B cell (primary cell): ENCODE measurements at regions of chr18 and their contacts with region 1.

Region 1: GRCh38 chr18:36284671-36285295 is 12.7 kb upstream of the FHOD3 start:
- DNase-seq: peak; percentile 77
- ATAC-seq: peak; percentile 70
- H3K4me3 ChIP-seq: no peak overlapping the region
- H3K4me3 Mint-ChIP-seq: no peak overlapping the region
- H3K27ac ChIP-seq: no peak overlapping the region
- H3K27ac Mint-ChIP-seq: no peak overlapping the region
- H3K4me1 ChIP-seq: no peaks in the 10 kb centered on the region
- H3K4me1 Mint-ChIP-seq: peaks cover 2% of the 10 kb centered on the region
- H3K27me3 ChIP-seq: peaks cover 0 to 13% (median 7%) of the 10 kb centered on the region in 4 experiments
- H3K27me3 Mint-ChIP-seq: peaks cover 48% of the 10 kb centered on the region
- CTCF ChIP-seq: peak; percentile 96

Region 2: DNA sequence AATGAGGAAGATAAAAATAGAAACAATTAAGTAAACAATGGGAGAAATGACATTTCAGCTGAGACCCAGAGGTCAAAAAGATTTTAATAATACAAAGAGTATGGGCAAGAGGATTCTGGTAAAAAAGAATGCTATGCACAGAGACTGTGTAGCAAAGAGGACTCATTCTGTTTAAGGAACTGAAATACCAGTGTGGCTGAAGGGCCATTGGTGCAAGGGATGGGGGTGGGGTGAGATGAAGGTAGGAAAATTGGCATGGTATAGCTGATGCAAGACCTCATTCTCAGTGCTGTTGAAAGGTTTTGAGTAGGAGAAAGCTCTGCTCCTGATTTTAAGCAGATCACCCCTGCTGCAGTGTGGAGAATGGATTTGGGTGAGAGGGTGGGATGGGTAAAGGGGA is 692.5 kb before region 1 on chr18:
- CTCF ChIA-PET with region 1: no interaction called
- POLR2A ChIA-PET with region 1: no interaction called
- intact Hi-C with region 1: loop called (anchors 1 kb)
- DNase-seq: peak; percentile 65
- ATAC-seq: peak; percentile 97
- H3K4me3 ChIP-seq: no peak overlapping the region
- H3K4me3 Mint-ChIP-seq: no peak overlapping the region
- H3K27ac ChIP-seq: peak overlapping the region in 1 of 2 donors; percentile 47
- H3K27ac Mint-ChIP-seq: no peak overlapping the region
- H3K4me1 ChIP-seq: peaks cover 54 to 55% of the 10 kb centered on the region in 2 donors
- H3K4me1 Mint-ChIP-seq: peaks cover 40% of the 10 kb centered on the region
- H3K27me3 ChIP-seq: no peaks in the 10 kb centered on the region
- H3K27me3 Mint-ChIP-seq: no peaks in the 10 kb centered on the region
- CTCF ChIP-seq: no peak

Region 3: DNA sequence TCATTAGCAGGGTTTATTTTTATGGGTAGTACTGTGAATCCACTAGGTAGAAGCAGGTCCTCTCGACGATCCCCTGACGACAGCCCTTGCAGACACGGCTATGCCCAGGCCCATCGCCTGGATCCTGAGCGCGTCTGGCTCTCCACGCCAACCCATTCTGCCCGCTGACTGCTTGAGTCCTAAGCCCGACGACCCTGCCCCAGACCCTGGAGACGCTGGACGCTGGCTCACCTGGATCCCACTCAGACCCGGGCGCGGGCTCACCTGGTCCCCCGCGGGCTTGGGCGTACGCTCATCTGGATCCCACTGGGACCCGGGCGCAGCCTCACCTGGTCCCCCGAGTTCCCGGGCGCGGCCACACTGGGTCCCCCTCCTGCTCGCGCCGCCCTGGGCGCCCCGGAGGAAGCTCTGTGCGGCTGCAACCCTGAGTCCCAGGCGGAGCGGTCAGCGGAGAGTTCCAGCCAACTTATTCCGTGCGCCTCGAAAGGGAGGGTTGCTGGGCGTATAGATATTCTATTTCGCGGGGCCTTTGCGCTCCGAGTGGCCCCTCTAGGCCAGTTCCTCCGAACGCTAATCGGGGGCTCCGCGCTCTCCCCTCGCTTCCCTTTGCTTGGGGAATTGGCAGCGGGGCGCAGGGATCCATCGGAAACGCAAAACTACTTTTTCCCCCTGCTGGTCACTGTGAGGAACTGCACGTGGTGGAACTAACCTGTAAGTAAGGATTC is 334.7 kb before region 1 on chr18:
- CTCF ChIA-PET with region 1: interaction called, 4 read pairs
- POLR2A ChIA-PET with region 1: no interaction called
- intact Hi-C with region 1: loop called (anchors 2 kb)
- DNase-seq: peak; percentile 77
- ATAC-seq: peak; percentile 86
- H3K4me3 ChIP-seq: peak overlapping the region; percentile 11 to 56 (median 49)
- H3K4me3 Mint-ChIP-seq: peak overlapping the region; percentile 81
- H3K27ac ChIP-seq: no peak overlapping the region
- H3K27ac Mint-ChIP-seq: no peak overlapping the region
- H3K4me1 ChIP-seq: peaks cover 7 to 8% of the 10 kb centered on the region in 2 donors
- H3K4me1 Mint-ChIP-seq: peaks cover 10% of the 10 kb centered on the region
- H3K27me3 ChIP-seq: peaks cover 0 to 10% (median 7%) of the 10 kb centered on the region in 4 experiments
- H3K27me3 Mint-ChIP-seq: peaks cover 32% of the 10 kb centered on the region
- CTCF ChIP-seq: peak; percentile 99

Region 4: GRCh38 chr18:36028859-36029258 is 255.9 kb before region 1 on chr18:
- CTCF ChIA-PET with region 1: interaction called, 11 read pairs
- POLR2A ChIA-PET with region 1: no interaction called
- intact Hi-C with region 1: no loop called
- DNase-seq: no peak
- ATAC-seq: no peak
- H3K4me3 ChIP-seq: no peak overlapping the region
- H3K4me3 Mint-ChIP-seq: no peak overlapping the region
- H3K27ac ChIP-seq: no peak overlapping the region
- H3K27ac Mint-ChIP-seq: no peak overlapping the region
- H3K4me1 ChIP-seq: peaks cover 22 to 34% of the 10 kb centered on the region in 2 donors
- H3K4me1 Mint-ChIP-seq: peaks cover 35% of the 10 kb centered on the region
- H3K27me3 ChIP-seq: no peaks in the 10 kb centered on the region
- H3K27me3 Mint-ChIP-seq: no peaks in the 10 kb centered on the region
- CTCF ChIP-seq: no peak

Region 5: DNA sequence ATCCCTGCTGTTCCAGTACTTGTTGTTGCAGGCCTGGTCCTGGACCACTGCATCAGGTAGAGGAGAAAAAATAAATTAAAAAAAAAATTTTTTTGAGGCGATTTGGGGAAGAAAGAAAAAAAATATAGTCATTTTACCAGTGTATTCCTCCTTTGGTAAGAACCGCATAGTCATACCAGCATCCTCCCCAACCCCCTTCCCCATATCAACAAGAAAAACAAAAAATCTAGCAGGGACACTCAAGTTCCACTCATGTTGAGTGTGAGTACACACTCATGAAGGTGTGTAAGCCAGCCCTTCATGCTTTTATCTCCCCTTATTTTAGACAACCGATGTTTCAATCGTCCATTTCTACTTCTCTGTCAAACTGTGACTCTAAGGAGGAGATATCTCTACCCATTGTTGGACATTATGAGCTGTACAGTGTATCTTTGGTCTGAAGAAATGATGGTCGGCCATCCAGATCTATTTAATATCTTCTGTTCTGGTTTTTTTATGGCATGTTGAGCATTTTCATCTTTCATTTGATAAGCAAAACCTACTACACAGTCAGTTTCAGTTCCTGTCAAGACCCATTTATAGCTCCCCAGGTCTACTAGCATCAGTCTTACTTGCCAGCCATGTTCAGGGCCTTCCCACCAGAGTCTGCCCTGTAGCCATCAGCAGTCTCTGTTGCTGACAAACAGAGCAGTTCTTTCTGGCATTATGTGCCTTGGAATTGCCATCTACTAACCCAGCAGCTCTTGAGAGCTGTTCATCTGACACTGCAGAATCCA is 135.1 kb before region 1 on chr18:
- CTCF ChIA-PET with region 1: interaction called, 10 read pairs
- POLR2A ChIA-PET with region 1: no interaction called
- intact Hi-C with region 1: no loop called
- DNase-seq: peak; percentile 71
- ATAC-seq: peak; percentile 96
- H3K4me3 ChIP-seq: peak overlapping the region in 2 of 5 experiments; percentile 11 to 16
- H3K4me3 Mint-ChIP-seq: peak overlapping the region; percentile 76
- H3K27ac ChIP-seq: peak overlapping the region; percentile 66 to 76
- H3K27ac Mint-ChIP-seq: peak overlapping the region; percentile 90
- H3K4me1 ChIP-seq: peaks cover 32 to 40% of the 10 kb centered on the region in 2 donors
- H3K4me1 Mint-ChIP-seq: peaks cover 42% of the 10 kb centered on the region
- H3K27me3 ChIP-seq: no peaks in the 10 kb centered on the region
- H3K27me3 Mint-ChIP-seq: no peaks in the 10 kb centered on the region
- CTCF ChIP-seq: no peak

Region 6: DNA sequence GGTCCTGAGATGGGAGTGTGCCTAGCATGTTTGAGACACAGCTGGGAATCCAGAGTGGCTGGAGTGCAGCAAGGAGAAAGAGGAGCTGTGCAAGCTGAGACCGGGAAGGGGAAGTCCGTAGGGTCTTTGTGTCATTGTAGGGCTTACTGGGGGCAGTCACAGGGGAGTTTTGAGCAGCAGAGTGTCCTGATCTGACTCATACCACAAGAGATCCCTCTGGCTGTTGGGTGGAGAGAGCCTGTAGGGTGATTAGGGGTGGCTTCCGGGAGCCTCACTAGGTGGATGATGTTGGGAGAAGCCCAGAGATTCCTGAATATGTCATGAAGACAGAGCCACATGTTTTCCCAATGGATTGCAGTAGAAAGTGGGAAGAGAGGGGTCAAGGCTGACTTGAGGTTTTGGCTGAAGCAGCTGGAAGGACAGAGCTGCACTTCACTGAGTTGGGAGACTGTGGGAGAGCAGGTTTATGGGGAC is 43.6 kb after region 1 on chr18:
- CTCF ChIA-PET with region 1: no interaction called
- POLR2A ChIA-PET with region 1: no interaction called
- intact Hi-C with region 1: no loop called
- DNase-seq: no peak
- ATAC-seq: no peak
- H3K4me3 ChIP-seq: no peak overlapping the region
- H3K4me3 Mint-ChIP-seq: no peak overlapping the region
- H3K27ac ChIP-seq: no peak overlapping the region
- H3K27ac Mint-ChIP-seq: no peak overlapping the region
- H3K4me1 ChIP-seq: no peaks in the 10 kb centered on the region
- H3K4me1 Mint-ChIP-seq: no peaks in the 10 kb centered on the region
- H3K27me3 ChIP-seq: peaks cover 0 to 11% (median 3%) of the 10 kb centered on the region in 4 experiments
- H3K27me3 Mint-ChIP-seq: peaks cover 40% of the 10 kb centered on the region
- CTCF ChIP-seq: no peak